ENCODE measurements at regions of chr12 and their contacts with region 1.

Region 1: DNA sequence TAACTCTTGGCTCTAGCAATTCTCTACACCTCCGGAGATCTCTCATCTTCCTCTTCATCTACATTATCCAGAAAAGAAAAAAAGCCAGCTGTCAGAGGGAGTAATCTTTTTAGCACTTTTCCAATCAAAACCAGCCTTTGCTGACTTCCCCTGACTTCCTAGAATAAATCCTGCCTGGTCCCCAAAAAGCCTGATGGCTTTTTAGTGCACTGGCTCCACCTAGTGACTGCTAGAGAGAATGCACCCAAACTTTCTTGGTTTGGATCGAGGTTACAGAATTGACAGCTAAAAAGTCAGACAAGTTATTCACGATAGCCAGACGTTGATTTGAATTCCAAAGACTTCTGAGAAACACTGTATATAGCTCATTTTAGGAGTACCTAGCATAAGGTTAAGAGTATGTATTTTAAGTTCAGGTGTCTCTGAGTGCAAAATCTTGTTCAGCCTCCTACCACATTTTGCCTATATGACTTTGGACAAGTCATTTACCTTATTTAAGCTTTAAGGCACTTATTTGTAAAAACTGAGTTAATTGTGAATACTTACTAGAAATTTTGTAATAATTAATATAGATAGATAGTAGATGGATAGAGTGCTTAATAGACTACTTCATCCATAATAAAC is 185.7 kb upstream of the GRIN2B start:
- DNase-seq: peak; percentile 76
- ATAC-seq: peak; percentile 72
- H3K4me3 ChIP-seq: no peak overlapping the region
- H3K4me3 Mint-ChIP-seq: no peak overlapping the region
- H3K27ac ChIP-seq: no peak overlapping the region
- H3K27ac Mint-ChIP-seq: no peak overlapping the region
- H3K4me1 ChIP-seq: peaks cover 19 to 21% of the 10 kb centered on the region in 2 donors
- H3K4me1 Mint-ChIP-seq: peaks cover 25% of the 10 kb centered on the region
- H3K27me3 ChIP-seq: no peaks in the 10 kb centered on the region
- H3K27me3 Mint-ChIP-seq: no peaks in the 10 kb centered on the region
- CTCF ChIP-seq: peak; percentile 100

Region 2: GRCh38 chr12:13362260-13362841 is 804.8 kb before region 1 on chr12:
- CTCF ChIA-PET with region 1: interaction called, 34 read pairs
- POLR2A ChIA-PET with region 1: no interaction called
- intact Hi-C with region 1: loop called (anchors 1 kb)
- DNase-seq: peak; percentile 68
- ATAC-seq: peak; percentile 67
- H3K4me3 ChIP-seq: no peak overlapping the region
- H3K4me3 Mint-ChIP-seq: no peak overlapping the region
- H3K27ac ChIP-seq: no peak overlapping the region
- H3K27ac Mint-ChIP-seq: no peak overlapping the region
- H3K4me1 ChIP-seq: no peaks in the 10 kb centered on the region
- H3K4me1 Mint-ChIP-seq: no peaks in the 10 kb centered on the region
- H3K27me3 ChIP-seq: peaks cover 0 to 7% (median 0%) of the 10 kb centered on the region in 4 experiments
- H3K27me3 Mint-ChIP-seq: peaks cover 12% of the 10 kb centered on the region
- CTCF ChIP-seq: peak; percentile 90

Region 3: GRCh38 chr12:13864081-13864673 is 302.9 kb before region 1 on chr12:
- CTCF ChIA-PET with region 1: interaction called, 135 read pairs
- POLR2A ChIA-PET with region 1: no interaction called
- intact Hi-C with region 1: loop called (anchors 1 kb)
- DNase-seq: peak; percentile 73
- ATAC-seq: peak; percentile 82
- H3K4me3 ChIP-seq: no peak overlapping the region
- H3K4me3 Mint-ChIP-seq: no peak overlapping the region
- H3K27ac ChIP-seq: no peak overlapping the region
- H3K27ac Mint-ChIP-seq: no peak overlapping the region
- H3K4me1 ChIP-seq: no peaks in the 10 kb centered on the region
- H3K4me1 Mint-ChIP-seq: no peaks in the 10 kb centered on the region
- H3K27me3 ChIP-seq: peaks cover 0 to 16% (median 3%) of the 10 kb centered on the region in 4 experiments
- H3K27me3 Mint-ChIP-seq: peaks cover 52% of the 10 kb centered on the region
- CTCF ChIP-seq: peak; percentile 99

Region 4: GRCh38 chr12:14086838-14087237 is 80.3 kb before region 1 on chr12:
- CTCF ChIA-PET with region 1: no interaction called
- POLR2A ChIA-PET with region 1: no interaction called
- intact Hi-C with region 1: no loop called
- DNase-seq: no peak
- ATAC-seq: no peak
- H3K4me3 ChIP-seq: no peak overlapping the region
- H3K4me3 Mint-ChIP-seq: no peak overlapping the region
- H3K27ac ChIP-seq: no peak overlapping the region
- H3K27ac Mint-ChIP-seq: no peak overlapping the region
- H3K4me1 ChIP-seq: no peaks in the 10 kb centered on the region
- H3K4me1 Mint-ChIP-seq: no peaks in the 10 kb centered on the region
- H3K27me3 ChIP-seq: peaks cover 0 to under 1% (median 0%) of the 10 kb centered on the region in 4 experiments
- H3K27me3 Mint-ChIP-seq: peaks cover 8% of the 10 kb centered on the region
- CTCF ChIP-seq: no peak

Region 5: DNA sequence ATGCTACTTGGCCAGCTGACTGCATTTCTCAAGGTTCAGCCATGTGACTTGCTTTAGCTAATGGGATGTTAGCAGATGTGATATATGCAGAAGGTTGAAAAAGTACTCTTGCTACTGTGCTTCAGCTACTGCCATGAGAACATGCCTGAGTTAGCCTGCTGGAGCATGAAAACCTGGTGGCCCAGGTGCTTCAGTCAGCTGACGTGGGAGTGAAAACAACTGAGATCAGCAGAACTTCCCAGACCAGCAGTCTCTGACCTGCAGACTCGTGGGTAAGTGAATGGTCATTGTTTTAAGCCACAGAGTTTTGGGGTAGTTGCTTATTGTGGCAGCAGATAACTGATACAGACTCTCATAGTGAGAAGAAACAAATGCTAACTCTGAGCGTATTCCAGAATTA is 67.1 kb before region 1 on chr12:
- CTCF ChIA-PET with region 1: interaction called, 12 read pairs
- POLR2A ChIA-PET with region 1: no interaction called
- intact Hi-C with region 1: no loop called
- DNase-seq: no peak
- ATAC-seq: no peak
- H3K4me3 ChIP-seq: no peak overlapping the region
- H3K4me3 Mint-ChIP-seq: no peak overlapping the region
- H3K27ac ChIP-seq: no peak overlapping the region
- H3K27ac Mint-ChIP-seq: no peak overlapping the region
- H3K4me1 ChIP-seq: no peaks in the 10 kb centered on the region
- H3K4me1 Mint-ChIP-seq: no peaks in the 10 kb centered on the region
- H3K27me3 ChIP-seq: peaks cover 0 to 6% (median 3%) of the 10 kb centered on the region in 4 experiments
- H3K27me3 Mint-ChIP-seq: peaks cover 32% of the 10 kb centered on the region
- CTCF ChIP-seq: no peak

Region 6: GRCh38 chr12:14138495-14138894 is 28.6 kb before region 1 on chr12:
- CTCF ChIA-PET with region 1: interaction called, 48 read pairs
- POLR2A ChIA-PET with region 1: no interaction called
- intact Hi-C with region 1: no loop called
- DNase-seq: peak; percentile 22
- ATAC-seq: peak; percentile 54
- H3K4me3 ChIP-seq: no peak overlapping the region
- H3K4me3 Mint-ChIP-seq: no peak overlapping the region
- H3K27ac ChIP-seq: no peak overlapping the region
- H3K27ac Mint-ChIP-seq: no peak overlapping the region
- H3K4me1 ChIP-seq: no peaks in the 10 kb centered on the region
- H3K4me1 Mint-ChIP-seq: no peaks in the 10 kb centered on the region
- H3K27me3 ChIP-seq: peaks cover 0 to 4% (median 0%) of the 10 kb centered on the region in 4 experiments
- H3K27me3 Mint-ChIP-seq: peaks cover 4% of the 10 kb centered on the region
- CTCF ChIP-seq: peak; percentile 33

Region 7: DNA sequence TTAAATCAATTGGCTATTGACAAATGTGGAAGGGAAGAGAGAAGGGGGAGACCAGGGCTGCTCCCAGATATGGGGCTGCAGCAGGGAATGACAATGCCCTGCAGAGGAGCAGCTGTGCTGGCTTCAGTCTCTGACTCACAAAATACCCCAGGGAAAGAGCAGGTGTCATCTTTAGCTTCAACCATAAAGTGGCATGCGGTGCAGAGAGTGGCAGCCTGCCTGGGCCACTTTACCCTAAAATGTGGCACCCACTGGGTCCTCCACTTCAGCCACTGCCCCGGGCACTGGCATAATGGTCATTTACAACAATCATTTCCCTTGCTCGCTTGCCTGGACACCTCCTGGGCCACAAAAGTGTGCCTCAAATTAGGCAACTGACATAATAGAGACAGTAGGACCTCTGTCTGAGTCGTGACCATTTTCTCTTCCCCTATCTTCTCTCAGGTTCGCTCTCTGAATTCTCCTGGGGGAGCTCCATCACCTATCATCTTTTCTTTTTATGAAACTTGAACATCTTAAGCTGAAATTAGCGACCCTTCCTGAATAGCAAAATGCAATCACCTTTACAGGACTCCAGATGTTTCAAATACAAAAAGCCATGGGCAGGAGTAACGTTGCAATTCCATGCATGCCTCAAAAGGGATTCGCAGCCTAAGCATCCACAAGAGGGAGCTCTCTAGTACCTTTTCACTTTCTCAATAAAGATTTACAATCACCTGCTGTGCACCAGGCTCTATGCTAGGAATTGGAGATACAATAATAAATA is 18.5 kb after region 1 on chr12:
- CTCF ChIA-PET with region 1: interaction called, 76 read pairs
- POLR2A ChIA-PET with region 1: no interaction called
- intact Hi-C with region 1: no loop called
- DNase-seq: peak; percentile 69
- ATAC-seq: peak; percentile 76
- H3K4me3 ChIP-seq: peak overlapping the region in 3 of 5 experiments; percentile 30 to 52 (median 40)
- H3K4me3 Mint-ChIP-seq: peak overlapping the region; percentile 85
- H3K27ac ChIP-seq: no peak overlapping the region
- H3K27ac Mint-ChIP-seq: peak overlapping the region; percentile 88
- H3K4me1 ChIP-seq: peaks cover 13 to 21% of the 10 kb centered on the region in 2 donors
- H3K4me1 Mint-ChIP-seq: peaks cover 20% of the 10 kb centered on the region
- H3K27me3 ChIP-seq: no peaks in the 10 kb centered on the region
- H3K27me3 Mint-ChIP-seq: no peaks in the 10 kb centered on the region
- CTCF ChIP-seq: peak; percentile 81

Region 8: DNA sequence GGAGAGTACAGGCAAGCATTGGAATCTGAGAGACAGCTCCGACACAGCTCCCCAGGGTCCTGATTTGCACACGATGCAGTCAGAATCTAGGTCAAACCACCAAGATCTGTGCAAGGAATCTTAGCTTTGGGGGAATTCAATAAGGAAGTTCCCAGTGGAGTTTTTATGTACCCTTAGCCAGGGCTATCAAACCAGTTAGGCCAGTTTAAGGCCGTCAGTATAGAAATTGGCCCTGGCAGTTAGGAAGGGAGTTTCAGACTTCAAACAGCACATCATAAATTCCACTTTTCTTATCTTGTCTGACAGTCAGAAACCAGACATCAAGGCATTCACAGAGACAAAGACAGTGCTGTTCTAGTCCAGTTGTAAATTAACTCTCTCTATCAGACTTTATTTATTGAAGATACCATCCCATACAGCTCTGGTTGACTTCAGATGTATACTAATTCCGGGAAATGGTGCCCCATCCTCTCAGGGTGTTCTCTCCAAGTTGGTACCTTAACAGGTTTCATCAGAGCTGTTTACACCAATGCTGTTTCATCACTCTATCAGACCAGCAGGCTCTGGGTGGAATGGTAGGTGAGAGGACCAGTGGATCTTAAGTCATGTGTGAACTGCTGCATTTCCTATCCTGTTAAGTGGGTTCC is 40.9 kb after region 1 on chr12:
- CTCF ChIA-PET with region 1: no interaction called
- POLR2A ChIA-PET with region 1: no interaction called
- intact Hi-C with region 1: no loop called
- DNase-seq: no peak
- ATAC-seq: no peak
- H3K4me3 ChIP-seq: no peak overlapping the region
- H3K4me3 Mint-ChIP-seq: no peak overlapping the region
- H3K27ac ChIP-seq: no peak overlapping the region
- H3K27ac Mint-ChIP-seq: no peak overlapping the region
- H3K4me1 ChIP-seq: no peaks in the 10 kb centered on the region
- H3K4me1 Mint-ChIP-seq: no peaks in the 10 kb centered on the region
- H3K27me3 ChIP-seq: no peaks in the 10 kb centered on the region
- H3K27me3 Mint-ChIP-seq: no peaks in the 10 kb centered on the region
- CTCF ChIP-seq: no peak

Measured in B cell (primary cell).